ENCODE measurements at regions of chr5 and their contacts with region 1.

Region 1: DNA sequence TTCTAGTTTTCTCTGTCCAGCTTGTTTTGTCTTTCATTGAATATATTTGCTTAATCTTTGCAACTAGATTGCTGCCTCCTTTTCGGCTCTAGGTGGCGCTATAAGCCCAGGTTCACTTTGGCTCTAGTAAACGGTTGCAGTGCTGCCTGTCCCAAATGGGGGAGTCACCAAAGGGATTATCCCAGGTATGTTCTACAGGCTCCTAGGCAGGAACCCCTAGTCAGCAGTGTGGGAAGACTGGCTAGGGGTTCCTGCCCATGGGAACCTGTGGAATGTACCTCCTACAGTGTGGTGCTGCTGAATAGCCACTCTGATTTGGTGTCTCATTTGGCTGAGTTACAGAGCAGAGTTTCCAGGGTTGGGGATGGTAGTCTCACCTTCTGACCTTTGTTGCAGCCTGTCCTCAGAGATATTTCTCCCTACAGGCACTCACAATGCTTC is 85.2 kb downstream of the ARSB start:
- DNase-seq: peak in 2 of 3 donors; percentile 45 to 75
- ATAC-seq: peak; percentile 75
- H3K4me3 ChIP-seq: no peak overlapping the region
- H3K4me1 ChIP-seq: no peaks in the 10 kb centered on the region
- CTCF ChIP-seq: peak; percentile 42

Region 2: GRCh38 chr5:78162253-78162862 is 737.6 kb before region 1 on chr5:
- intact Hi-C with region 1: no loop called
- DNase-seq: no peak
- ATAC-seq: no peak
- H3K4me3 ChIP-seq: no peak overlapping the region
- H3K4me1 ChIP-seq: no peaks in the 10 kb centered on the region
- CTCF ChIP-seq: no peak

Region 3: DNA sequence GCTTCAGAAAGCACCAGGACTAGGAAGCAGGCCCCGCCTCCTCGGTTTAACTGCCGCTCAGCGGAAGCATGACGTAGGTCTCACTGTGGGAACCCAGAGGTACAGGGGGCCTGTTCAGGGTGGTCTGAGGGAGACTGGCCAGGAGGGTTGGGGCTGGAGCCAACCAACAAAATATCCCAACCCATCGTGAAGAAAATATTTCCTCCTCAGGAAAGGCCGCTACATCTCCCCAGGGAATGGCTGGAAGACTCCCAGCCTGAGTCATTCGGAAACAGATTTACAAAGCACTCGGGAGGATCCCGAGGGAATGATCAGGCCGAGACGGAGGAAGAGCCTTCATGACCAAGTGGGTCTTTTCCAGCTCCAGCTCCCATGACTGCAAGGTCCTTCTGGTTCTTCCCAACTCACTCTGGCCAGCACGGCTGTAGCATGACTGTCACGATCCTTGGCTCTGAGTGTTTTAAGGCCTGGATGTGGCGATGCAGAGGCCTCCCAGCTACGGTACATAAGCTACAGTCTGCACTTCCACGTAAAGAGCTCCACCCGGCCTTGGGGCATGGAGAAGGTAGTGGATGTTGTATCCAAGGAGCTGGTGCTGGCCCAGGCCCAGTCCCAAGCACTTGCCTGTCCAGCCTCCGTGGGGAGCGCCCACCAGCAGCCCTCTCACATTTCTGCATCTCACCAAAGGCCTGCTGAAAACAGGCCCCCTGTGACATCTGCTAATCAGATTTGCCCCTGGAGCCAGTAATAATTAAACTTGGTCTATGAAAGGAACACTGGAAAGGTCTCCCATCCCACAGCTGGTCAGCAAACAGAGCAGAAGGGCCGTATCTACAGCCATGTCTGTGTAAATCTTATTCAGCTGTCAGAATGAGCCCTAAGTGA is 352.0 kb before region 1 on chr5:
- intact Hi-C with region 1: loop called in 1 of 2 experiments (anchors 10 kb)
- DNase-seq: peak; percentile 43 to 73 (median 57)
- ATAC-seq: peak; percentile 62
- H3K4me3 ChIP-seq: no peak overlapping the region
- H3K4me1 ChIP-seq: no peaks in the 10 kb centered on the region
- CTCF ChIP-seq: no peak

Region 4: DNA sequence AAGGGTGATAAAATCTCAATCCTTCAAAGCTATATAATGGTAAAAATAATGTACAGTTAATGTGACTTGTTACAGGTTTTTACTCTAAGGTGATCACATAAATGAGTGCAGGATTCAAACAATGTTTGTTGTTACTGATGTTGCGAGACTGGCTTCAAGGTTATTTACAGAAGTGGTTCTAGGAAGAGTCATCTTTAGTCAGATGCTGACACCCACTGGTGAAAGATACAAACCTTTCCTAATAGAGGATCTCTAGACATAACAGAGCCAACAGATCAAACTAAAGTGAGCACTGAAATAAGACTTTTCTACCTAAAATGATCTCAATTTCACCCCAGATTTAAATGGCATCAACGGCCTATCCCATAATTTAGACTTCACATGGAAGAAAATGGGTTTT is 64.9 kb after region 1 on chr5:
- intact Hi-C with region 1: loop called in 1 of 2 experiments (anchors 10 kb)
- DNase-seq: peak in 1 of 3 donors; percentile 55
- ATAC-seq: peak; percentile 57
- H3K4me3 ChIP-seq: no peak overlapping the region
- H3K4me1 ChIP-seq: no peaks in the 10 kb centered on the region
- CTCF ChIP-seq: peak; percentile 5

Region 5: GRCh38 chr5:79173626-79174025 is 273.7 kb after region 1 on chr5:
- intact Hi-C with region 1: no loop called
- DNase-seq: peak in 1 of 3 donors; percentile 28
- ATAC-seq: peak; percentile 80
- H3K4me3 ChIP-seq: no peak overlapping the region
- H3K4me1 ChIP-seq: peaks cover 9% of the 10 kb centered on the region
- CTCF ChIP-seq: no peak

Measured in mucosa of descending colon (tissue), 3 donors.